Esophagus squamous epithelium (tissue), 5 donors: ENCODE measurements at regions of chr3 and their contacts with region 1.

Region 1: GRCh38 chr3:66407611-66408218 is 93.1 kb downstream of the LRIG1 start:
- DNase-seq: no peak
- H3K4me3 ChIP-seq: no peak overlapping the region
- H3K27ac ChIP-seq: peak overlapping the region in 2 of 4 donors; percentile 5 to 27
- H3K4me1 ChIP-seq: peaks cover 0 to 63% (median 17%) of the 10 kb centered on the region in 3 donors
- H3K27me3 ChIP-seq: no peaks in the 10 kb centered on the region
- CTCF ChIP-seq: peak; percentile 70 to 90 (median 88)
- POLR2A ChIP-seq: no peak

Region 2: GRCh38 chr3:66816090-66816761 is 408.5 kb after region 1 on chr3:
- intact Hi-C with region 1: loop called (anchors 5 kb)
- DNase-seq: no peak
- H3K4me3 ChIP-seq: no peak overlapping the region
- H3K27ac ChIP-seq: no peak overlapping the region
- H3K4me1 ChIP-seq: no peaks in the 10 kb centered on the region
- H3K27me3 ChIP-seq: no peaks in the 10 kb centered on the region
- CTCF ChIP-seq: peak; percentile 41 to 72 (median 60)
- POLR2A ChIP-seq: no peak